ENCODE measurements at regions of chr4 and their contacts with region 1.

Region 1: GRCh38 chr4:38654273-38654672 is 9.7 kb upstream of the KLF3 start:
- DNase-seq: no peak
- ATAC-seq: peak in 1 of 8 donors; percentile 49
- H3K4me3 ChIP-seq: no peak overlapping the region
- H3K27ac ChIP-seq: peak overlapping the region in 1 of 10 donors; percentile 54
- H3K4me1 ChIP-seq: peaks cover 0 to 10% (median 0%) of the 10 kb centered on the region in 9 donors
- H3K27me3 ChIP-seq: no peaks in the 10 kb centered on the region
- CTCF ChIP-seq: no peak

Region 2: GRCh38 chr4:38547052-38547451 is 107.2 kb before region 1 on chr4:
- intact Hi-C with region 1: loop called in 1 of 10 experiments (anchors 10 kb)
- DNase-seq: no peak
- ATAC-seq: no peak
- H3K4me3 ChIP-seq: no peak overlapping the region
- H3K27ac ChIP-seq: no peak overlapping the region
- H3K4me1 ChIP-seq: peaks cover 0 to 7% (median 0%) of the 10 kb centered on the region in 9 donors
- H3K27me3 ChIP-seq: no peaks in the 10 kb centered on the region
- CTCF ChIP-seq: no peak

Measured in heart right ventricle (tissue), 16 donors.